ENCODE measurements at regions of chr1 and their contacts with region 1.

Region 1: GRCh38 chr1:231528172-231529029 is at the start of gene TSNAX:
- DNase-seq: peak; percentile 87 to 94 (median 93)
- H3K4me3 ChIP-seq: peak within 1 kb of the TSS; percentile 59 to 86
- H3K4me3 Mint-ChIP-seq: peak within 1 kb of the TSS; percentile 96 to 98 (median 98)
- H3K27ac ChIP-seq: peak within 1 kb of the TSS; percentile 82
- H3K27ac Mint-ChIP-seq: peak within 1 kb of the TSS; percentile 99 to 100 (median 100)
- H3K4me1 ChIP-seq: peaks cover 52% of the 10 kb centered on the region
- H3K4me1 Mint-ChIP-seq: peaks cover 19 to 52% (median 36%) of the 10 kb centered on the region in 4 donors
- H3K27me3 ChIP-seq: no peaks in the 10 kb centered on the region
- H3K27me3 Mint-ChIP-seq: no peaks in the 10 kb centered on the region
- total RNA-seq, gene TSNAX: 43.5 to 50.7 TPM

Region 2: GRCh38 chr1:231240883-231241735 is 287.3 kb before region 1 on chr1 and contains the start of gene GNPAT:
- CTCF ChIA-PET with region 1: no interaction called
- POLR2A ChIA-PET with region 1: interaction called, 3 read pairs
- intact Hi-C with region 1: loop called (anchors 1 kb)
- DNase-seq: peak; percentile 87 to 94 (median 91)
- H3K4me3 ChIP-seq: peak within 1 kb of the TSS; percentile 83 to 99
- H3K4me3 Mint-ChIP-seq: peak within 1 kb of the TSS; percentile 95 to 99 (median 98)
- H3K27ac ChIP-seq: peak within 1 kb of the TSS; percentile 93
- H3K27ac Mint-ChIP-seq: peak within 1 kb of the TSS; percentile 85 to 99 (median 98)
- H3K4me1 ChIP-seq: peaks cover 56% of the 10 kb centered on the region
- H3K4me1 Mint-ChIP-seq: peaks cover 55 to 85% (median 71%) of the 10 kb centered on the region in 4 donors
- H3K27me3 ChIP-seq: no peaks in the 10 kb centered on the region
- H3K27me3 Mint-ChIP-seq: no peaks in the 10 kb centered on the region
- total RNA-seq, gene GNPAT: 36.9 to 41.2 TPM

Region 3: DNA sequence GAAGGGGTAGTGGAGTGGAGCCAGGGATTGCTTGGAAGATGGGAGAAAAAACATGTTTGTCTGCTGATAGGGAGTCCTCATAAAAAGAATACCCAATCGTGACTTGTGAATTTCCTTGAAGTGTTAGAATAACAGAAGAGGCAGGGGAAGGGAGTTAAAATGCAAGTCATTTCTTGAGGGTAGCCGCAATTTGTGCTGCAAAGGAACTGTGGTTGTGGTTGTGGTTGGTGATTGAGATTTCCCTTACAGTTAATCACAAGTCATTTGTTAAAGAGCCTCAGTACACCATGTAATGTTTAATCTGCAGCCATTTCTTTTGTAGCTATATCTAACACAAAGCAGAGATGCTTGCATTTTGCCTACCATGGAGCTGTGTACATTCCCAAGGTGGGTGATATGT is 67.8 kb before region 1 on chr1:
- CTCF ChIA-PET with region 1: no interaction called
- POLR2A ChIA-PET with region 1: no interaction called
- intact Hi-C with region 1: loop called (anchors 1 kb)
- DNase-seq: peak; percentile 76 to 83 (median 78)
- H3K4me3 ChIP-seq: no peak overlapping the region
- H3K4me3 Mint-ChIP-seq: peak overlapping the region in 4 of 8 donors; percentile 1 to 43 (median 1)
- H3K27ac ChIP-seq: no peak overlapping the region
- H3K27ac Mint-ChIP-seq: peak overlapping the region in 4 of 7 donors; percentile 13 to 51 (median 30)
- H3K4me1 ChIP-seq: peaks cover 20% of the 10 kb centered on the region
- H3K4me1 Mint-ChIP-seq: peaks cover 10 to 18% (median 15%) of the 10 kb centered on the region in 4 donors
- H3K27me3 ChIP-seq: peaks cover 9% of the 10 kb centered on the region
- H3K27me3 Mint-ChIP-seq: peaks cover 40 to 46% of the 10 kb centered on the region in 2 donors

Region 4: DNA sequence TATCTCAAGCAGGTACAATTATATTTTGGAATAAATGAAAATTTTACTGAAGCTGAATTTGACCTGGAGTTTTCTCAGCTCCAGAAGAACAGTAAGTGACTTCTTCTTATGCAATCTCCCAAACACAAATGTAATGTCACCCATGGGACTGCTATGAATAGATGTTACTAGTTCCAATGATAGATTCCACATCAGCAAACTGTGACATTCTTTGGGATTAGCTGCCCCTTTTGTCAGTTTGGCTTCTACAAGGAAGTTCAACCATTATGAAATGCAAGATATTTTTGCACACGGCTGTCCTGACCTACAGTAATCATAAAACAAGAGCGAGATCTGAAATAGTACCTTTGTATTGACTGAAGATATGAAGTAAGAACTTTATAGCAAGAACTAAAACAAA is 27.7 kb before region 1 on chr1:
- CTCF ChIA-PET with region 1: no interaction called
- POLR2A ChIA-PET with region 1: no interaction called
- intact Hi-C with region 1: no loop called
- DNase-seq: no peak
- H3K4me3 ChIP-seq: no peak overlapping the region
- H3K4me3 Mint-ChIP-seq: no peak overlapping the region
- H3K27ac ChIP-seq: no peak overlapping the region
- H3K27ac Mint-ChIP-seq: no peak overlapping the region
- H3K4me1 ChIP-seq: no peaks in the 10 kb centered on the region
- H3K4me1 Mint-ChIP-seq: no peaks in the 10 kb centered on the region
- H3K27me3 ChIP-seq: no peaks in the 10 kb centered on the region
- H3K27me3 Mint-ChIP-seq: peaks cover 3 to 4% of the 10 kb centered on the region in 2 donors

Measured in CD4-positive, alpha-beta memory T cell (primary cell).